ENCODE measurements at regions of chr17 and their contacts with region 1.

Region 1: DNA sequence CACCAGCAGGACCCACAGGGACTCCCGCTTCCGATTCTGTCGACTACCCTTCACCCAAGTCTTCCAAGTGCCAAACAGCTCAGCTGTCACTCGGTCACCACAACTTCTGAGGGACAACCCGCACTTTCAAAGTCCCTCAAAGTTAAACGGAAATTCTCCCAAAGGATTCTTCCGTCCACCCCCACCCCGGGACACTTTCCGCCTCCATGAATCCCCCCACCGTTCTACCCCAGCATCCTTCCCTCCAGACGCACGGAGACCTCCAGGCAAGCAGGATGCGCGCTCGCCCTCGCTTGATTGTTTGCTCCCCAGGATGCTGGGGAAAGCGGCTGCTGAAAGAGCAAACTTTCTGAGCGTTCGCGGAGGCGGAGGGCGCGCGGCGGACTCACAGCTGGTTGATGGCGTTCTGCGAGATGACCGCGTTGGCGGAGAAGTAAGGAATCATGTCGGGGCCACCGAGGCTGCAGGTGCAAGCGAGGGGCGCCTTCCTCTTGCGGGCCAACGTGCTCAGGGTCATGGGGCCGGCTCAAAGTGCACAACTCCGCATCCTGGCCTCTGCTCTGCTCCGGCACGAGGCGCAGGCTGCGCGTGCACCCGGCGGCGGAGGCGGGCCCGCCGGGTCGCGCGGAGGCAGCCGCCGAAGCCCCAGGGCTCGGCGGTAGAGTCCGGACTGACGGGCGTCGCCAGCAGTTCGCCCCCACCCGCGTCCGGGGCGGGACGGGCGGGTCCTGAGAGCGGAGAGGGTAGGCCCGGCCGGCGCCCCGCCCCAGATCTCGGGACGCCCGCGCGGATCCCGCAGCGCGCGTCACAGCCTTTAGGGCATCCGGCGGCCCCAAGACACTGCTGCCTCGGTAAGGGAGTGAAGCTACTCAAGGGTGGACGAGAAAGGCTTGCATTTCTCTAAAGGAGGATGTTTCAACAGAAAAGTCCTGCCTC is 138.3 kb upstream of the CORO6 start:
- DNase-seq: peak; percentile 98
- H3K4me3 Mint-ChIP-seq: peak overlapping the region; percentile 98
- H3K27ac Mint-ChIP-seq: peak overlapping the region; percentile 97
- H3K4me1 Mint-ChIP-seq: peaks cover 35% of the 10 kb centered on the region
- H3K27me3 Mint-ChIP-seq: no peaks in the 10 kb centered on the region

Region 2: GRCh38 chr17:29617125-29617480 is 143.9 kb before region 1 on chr17:
- intact Hi-C with region 1: loop called (anchors 2 kb)
- DNase-seq: peak; percentile 97
- H3K4me3 Mint-ChIP-seq: peak overlapping the region; percentile 83
- H3K27ac Mint-ChIP-seq: peak overlapping the region; percentile 93
- H3K4me1 Mint-ChIP-seq: peaks cover 38% of the 10 kb centered on the region
- H3K27me3 Mint-ChIP-seq: peaks cover 6% of the 10 kb centered on the region

Region 3: DNA sequence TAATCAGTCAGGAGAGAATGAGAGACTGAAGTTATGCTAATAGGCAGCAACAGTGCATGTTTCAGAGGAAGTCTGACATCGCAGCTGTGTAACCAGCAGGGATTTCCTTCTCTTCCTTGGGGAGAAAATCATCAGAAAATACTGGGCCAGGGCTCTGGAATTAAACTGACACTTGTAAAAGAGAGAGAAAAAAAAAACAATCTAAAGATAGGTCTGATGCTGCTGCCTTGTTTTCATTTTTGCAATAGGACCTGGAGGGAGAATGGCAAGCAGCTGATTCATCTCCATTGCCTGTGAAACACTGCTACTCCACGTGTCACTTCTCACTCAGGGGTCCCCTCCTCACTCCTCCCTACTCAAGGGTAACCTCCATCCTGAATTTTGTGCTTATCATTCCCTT is 120.6 kb before region 1 on chr17:
- intact Hi-C with region 1: loop called (anchors 1 kb)
- DNase-seq: no peak
- H3K4me3 Mint-ChIP-seq: no peak overlapping the region
- H3K27ac Mint-ChIP-seq: peak overlapping the region; percentile 70
- H3K4me1 Mint-ChIP-seq: peaks cover 17% of the 10 kb centered on the region
- H3K27me3 Mint-ChIP-seq: no peaks in the 10 kb centered on the region

Region 4: DNA sequence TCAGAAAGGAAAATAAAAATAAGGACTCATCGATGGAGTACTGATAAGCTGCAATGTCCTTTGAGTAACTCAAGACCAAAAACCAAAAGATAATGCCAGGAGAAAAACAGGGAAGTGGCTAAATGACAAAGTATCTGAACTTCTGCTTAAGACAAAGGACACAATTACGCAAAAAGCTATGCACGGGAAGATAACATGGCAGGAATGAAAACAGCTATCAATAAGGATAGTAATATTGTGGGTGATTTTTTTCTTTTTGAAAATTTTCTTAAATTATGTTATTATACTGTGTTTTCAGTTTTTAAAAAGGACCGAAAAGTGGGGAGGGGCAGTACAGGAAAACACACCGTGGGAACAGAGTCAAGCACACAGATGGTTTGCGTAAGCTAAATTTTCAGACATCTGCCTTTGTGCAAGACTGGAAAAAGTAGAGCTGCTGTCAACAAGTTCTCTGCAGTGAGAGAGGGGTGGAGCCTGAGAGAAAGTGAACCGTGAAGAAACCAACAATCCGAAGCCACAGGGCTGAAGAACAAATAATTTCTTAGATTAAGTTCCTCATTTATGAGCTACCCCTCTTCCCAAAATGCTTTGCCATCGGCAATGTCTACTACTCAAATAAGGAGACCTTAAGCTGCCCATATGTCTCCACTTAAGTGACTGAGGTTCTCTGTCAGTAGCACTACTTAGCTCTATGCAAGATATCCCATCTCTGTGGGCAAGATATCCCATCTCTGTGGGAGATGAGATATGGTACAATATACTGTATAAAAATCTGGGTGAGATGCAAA is 38.4 kb before region 1 on chr17:
- intact Hi-C with region 1: loop called (anchors 5 kb)
- DNase-seq: peak; percentile 79
- H3K4me3 Mint-ChIP-seq: peak overlapping the region; percentile 56
- H3K27ac Mint-ChIP-seq: peak overlapping the region; percentile 74
- H3K4me1 Mint-ChIP-seq: peaks cover 51% of the 10 kb centered on the region
- H3K27me3 Mint-ChIP-seq: no peaks in the 10 kb centered on the region

Region 5: DNA sequence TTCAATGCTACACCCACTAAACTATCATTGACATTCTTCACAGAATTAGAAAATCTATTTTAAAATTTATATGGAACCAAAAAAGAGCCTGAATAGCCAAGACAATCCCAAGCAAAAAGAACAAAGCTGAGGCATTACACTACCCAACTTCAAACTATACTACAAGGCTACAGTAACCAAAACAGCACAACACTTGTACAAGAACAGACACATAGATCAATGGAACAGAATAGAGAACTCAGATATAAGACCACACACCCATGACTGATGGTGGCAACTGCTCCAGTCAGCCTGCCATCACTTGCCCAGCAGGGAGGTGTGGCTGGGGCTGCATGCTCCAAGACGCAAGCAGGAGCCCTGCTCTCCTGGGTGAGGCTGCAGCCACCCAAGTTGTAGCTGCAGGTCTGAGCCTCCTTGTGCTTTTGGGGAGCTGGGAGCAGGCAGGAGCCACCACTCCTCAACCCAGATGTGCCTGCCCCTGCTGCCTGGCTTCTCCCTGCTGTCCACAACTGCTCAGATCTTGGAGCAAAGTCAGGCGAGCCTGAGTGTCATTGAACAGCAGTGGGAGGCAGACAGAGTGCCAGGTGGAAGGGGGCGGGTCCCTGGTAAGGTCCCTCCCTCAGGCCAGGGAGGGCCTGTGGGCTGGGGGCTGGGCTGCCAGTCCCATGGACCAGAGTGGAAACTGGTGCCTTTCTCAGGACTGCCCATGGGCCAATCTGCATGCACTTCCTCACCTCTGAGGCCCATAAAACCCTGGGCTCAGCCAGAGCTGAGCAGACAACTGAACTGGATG is 144.3 kb after region 1 on chr17:
- intact Hi-C with region 1: no loop called
- DNase-seq: no peak
- H3K4me3 Mint-ChIP-seq: no peak overlapping the region
- H3K27ac Mint-ChIP-seq: no peak overlapping the region
- H3K4me1 Mint-ChIP-seq: peaks cover 14% of the 10 kb centered on the region
- H3K27me3 Mint-ChIP-seq: no peaks in the 10 kb centered on the region